Mammary epithelial cell (primary cell): ENCODE measurements at regions of chr20 and their contacts with region 1.

Region 1: DNA sequence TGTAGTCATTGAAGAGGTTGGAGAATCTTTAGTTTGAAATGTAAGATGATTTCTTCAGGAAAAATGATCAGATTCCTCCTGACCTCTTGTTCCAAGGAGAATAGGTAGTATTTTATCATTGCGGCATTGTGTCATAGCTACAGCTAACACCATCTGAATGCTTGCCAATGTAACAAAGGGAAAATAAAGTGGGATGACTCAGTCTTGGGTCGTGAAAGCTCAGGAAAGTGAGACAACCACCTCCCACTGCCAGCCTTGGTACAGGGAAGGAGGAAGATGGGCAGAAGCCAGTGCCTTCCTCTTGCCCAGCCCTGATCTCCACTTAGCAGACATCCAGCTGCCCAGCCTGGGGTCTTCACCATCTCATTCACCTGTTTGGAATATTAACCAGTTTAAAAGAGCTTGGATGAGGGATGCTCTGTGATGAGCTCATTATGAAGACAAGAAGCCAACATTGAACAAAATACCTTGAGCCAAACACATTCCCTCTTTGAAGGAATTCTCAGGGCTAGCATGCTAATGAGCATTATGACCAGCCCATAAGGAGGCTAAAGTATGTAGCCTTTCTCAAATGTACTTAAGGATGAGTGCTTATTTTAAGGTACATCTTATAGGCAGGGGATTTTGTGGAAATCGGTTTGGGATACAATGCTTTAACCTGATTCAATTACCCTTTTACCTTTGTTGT is 40.0 kb upstream of the APCDD1L start:
- DNase-seq: peak; percentile 77
- H3K4me3 ChIP-seq: no peak overlapping the region
- H3K27ac ChIP-seq: no peak overlapping the region
- H3K4me1 ChIP-seq: no peaks in the 10 kb centered on the region
- H3K27me3 ChIP-seq: peaks cover 2% of the 10 kb centered on the region
- CTCF ChIP-seq: no peak

Region 2: DNA sequence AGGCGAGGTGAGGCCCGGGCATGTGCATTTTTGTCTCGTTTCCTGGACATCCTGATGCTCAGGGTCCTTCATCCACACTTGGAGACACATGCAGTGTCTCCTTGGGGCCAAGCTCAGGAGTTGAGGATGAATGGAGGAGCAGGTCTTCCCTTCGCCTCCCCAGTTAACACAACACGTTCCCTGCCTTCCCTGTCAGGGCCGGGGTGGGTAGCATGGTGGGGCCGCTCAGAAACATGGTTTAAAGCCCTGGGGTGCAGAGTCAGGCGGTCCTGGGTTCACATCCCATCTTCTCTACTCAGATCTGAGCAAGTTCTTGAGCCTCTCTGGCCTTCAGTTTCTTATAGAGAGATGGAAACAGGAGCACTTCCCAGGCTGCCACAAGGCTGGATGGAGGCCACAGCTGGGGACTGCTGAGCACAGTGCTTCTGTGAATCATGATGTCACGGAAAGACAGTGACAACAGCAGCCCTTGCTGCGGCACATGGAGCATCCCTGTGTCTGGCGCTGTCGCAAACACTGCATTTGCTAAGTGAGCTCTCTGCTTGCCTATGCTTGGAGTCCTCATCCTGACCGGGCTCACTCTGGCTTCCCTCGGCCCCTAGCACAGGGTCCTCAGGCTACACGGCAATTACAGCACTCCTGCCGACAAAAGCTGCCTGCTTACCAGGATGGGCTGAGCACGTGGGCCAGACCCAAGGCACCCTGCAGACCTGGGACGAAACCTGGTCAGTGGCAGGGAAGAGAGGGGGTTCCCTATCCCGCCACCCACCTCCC is 50.3 kb after region 1 on chr20:
- CTCF ChIA-PET with region 1: no interaction called
- dilution Hi-C with region 1: loop called (anchors 5 kb)
- in situ Hi-C with region 1: no loop called
- intact Hi-C with region 1: no loop called
- DNase-seq: no peak
- H3K4me3 ChIP-seq: no peak overlapping the region
- H3K27ac ChIP-seq: no peak overlapping the region
- H3K4me1 ChIP-seq: no peaks in the 10 kb centered on the region
- H3K27me3 ChIP-seq: no peaks in the 10 kb centered on the region
- CTCF ChIP-seq: no peak

Region 3: GRCh38 chr20:58864350-58864749 is 309.1 kb after region 1 on chr20:
- CTCF ChIA-PET with region 1: no interaction called
- dilution Hi-C with region 1: no loop called
- in situ Hi-C with region 1: no loop called
- intact Hi-C with region 1: no loop called
- DNase-seq: no peak
- H3K4me3 ChIP-seq: no peak overlapping the region
- H3K27ac ChIP-seq: no peak overlapping the region
- H3K4me1 ChIP-seq: no peaks in the 10 kb centered on the region
- H3K27me3 ChIP-seq: peaks cover 9% of the 10 kb centered on the region
- CTCF ChIP-seq: peak in 1 of 2 donors; percentile 42